Left ventricle myocardium inferior (tissue), 1 donor: ENCODE measurements at regions of chr16 and their contacts with region 1.

Region 1: GRCh38 chr16:4200000-4200780 is 41.7 kb downstream of the SRL start:
- DNase-seq: peak; percentile 61
- H3K4me3 ChIP-seq: no peak overlapping the region
- H3K27ac ChIP-seq: peak overlapping the region; percentile 4
- H3K4me1 ChIP-seq: peaks cover 19% of the 10 kb centered on the region
- H3K27me3 ChIP-seq: no peaks in the 10 kb centered on the region
- CTCF ChIP-seq: peak; percentile 76

Region 2: DNA sequence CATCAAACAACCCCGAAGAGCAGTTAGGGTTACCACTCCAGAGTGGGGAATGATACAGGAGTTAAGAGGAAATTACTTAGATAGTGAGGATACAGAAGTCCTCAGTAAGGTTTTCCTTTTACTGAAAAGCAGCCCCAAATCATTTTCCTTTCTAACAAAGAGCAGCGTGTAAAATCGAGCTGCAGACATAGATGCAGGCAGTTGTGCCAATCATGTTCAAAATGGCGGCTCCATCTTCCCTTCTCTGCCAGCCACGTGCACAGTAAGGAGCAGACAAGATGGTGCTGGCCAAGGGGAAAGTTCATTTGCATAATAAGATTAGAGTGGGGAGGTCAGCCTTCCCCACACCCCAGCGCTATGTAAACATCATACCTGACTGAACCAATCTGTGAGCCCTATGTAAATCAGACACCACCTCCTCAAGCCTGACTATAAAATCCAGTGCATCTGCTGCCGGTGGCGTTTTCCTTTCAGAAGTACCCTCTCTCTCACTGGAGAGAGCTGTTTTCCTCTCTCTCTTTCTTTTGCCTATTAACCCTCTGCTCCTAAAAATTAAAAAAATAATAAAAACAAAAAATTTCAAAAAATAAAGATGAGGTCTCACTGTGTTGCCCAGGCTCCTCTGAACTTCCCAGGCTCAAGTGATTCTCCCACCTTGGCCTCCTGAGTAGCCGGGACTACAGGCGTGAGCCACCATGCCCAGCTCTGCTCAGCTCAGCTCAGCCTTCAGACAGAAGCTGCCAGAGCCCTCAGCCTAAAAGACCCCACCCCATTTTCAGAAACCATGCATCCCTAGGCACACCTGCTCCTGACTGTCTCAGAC is 44.3 kb after region 1 on chr16:
- intact Hi-C with region 1: loop called (anchors 5 kb)
- DNase-seq: no peak
- H3K4me3 ChIP-seq: no peak overlapping the region
- H3K27ac ChIP-seq: no peak overlapping the region
- H3K4me1 ChIP-seq: peaks cover 18% of the 10 kb centered on the region
- H3K27me3 ChIP-seq: no peaks in the 10 kb centered on the region
- CTCF ChIP-seq: no peak